ENCODE measurements at regions of chr16 and their contacts with region 1.

Region 1: DNA sequence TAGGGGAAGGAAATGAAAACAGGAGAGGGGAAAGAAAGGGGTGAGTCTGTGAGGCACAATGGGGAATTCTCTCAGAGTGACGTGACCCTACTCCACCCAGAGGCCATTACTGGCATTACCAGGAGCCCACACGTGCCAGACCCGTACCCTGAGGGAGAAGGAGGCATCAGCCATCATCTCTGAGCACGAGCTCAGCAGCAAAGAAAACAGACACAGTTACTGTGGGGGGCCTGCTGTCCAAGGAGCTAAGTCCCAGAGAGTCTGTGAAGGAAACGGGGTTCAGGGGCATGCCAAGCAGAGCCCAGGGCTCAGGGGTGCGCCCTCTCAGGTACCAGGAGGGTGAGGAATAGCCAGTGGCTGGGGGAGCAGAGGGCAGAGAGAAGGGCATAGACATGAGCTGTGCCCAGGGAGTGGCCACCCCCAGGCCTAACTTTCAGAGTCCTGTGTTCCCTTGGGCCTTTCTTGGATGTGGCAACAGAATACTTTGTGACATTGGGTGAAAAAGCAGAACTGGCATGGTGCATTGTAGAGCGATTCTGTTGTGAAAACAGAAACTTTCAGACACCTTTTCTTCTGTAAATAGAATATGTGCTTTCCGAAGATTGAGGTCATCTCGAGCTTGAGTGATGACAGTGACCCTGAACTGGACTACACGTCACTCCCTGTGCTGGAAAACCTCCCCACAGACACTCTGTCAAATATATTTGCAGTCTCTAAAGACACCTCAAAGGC is 11.3 kb downstream of the TAF1C start:
- DNase-seq: peak; percentile 81
- H3K27ac ChIP-seq: peak overlapping the region; percentile 95
- CTCF ChIP-seq: peak; percentile 85

Region 2: GRCh38 chr16:84024854-84025253 is 150.7 kb before region 1 on chr16:
- CTCF ChIA-PET with region 1: no interaction called
- POLR2A ChIA-PET with region 1: no interaction called
- DNase-seq: peak; percentile 77
- H3K27ac ChIP-seq: peak overlapping the region; percentile 86
- CTCF ChIP-seq: no peak

Region 3: DNA sequence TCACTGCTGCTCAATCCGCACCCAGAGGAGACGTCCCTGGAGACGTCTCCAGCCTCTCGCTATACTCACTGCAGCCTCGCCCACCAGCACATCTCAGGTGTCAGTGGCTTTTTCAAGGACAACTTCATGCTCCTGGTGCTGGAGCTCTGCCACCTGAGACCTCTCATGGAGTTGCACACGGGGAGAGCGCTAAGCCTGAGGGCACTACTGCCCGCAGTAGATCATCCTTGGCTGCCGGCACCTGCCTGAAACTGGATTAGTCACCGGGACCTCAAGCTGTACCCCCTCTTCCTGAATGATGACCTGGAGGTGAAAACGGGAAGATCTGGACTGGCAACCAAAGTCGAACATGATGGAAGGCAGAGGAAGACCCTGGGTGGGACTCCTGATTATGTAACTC is 56.1 kb before region 1 on chr16:
- CTCF ChIA-PET with region 1: interaction called, 10 read pairs
- POLR2A ChIA-PET with region 1: interaction called, 4 read pairs
- DNase-seq: peak; percentile 26
- H3K27ac ChIP-seq: no peak overlapping the region
- CTCF ChIP-seq: no peak

Region 4: GRCh38 chr16:84186685-84187437 is 11.3 kb after region 1 on chr16 and contains the start of gene TAF1C:
- CTCF ChIA-PET with region 1: interaction called, 37 read pairs
- POLR2A ChIA-PET with region 1: interaction called, 3 read pairs
- DNase-seq: peak; percentile 93
- H3K27ac ChIP-seq: peak within 1 kb of the TSS; percentile 66
- CTCF ChIP-seq: peak; percentile 96

Measured in RWPE1 (cell line).